Naive thymus-derived CD4-positive, alpha-beta T cell (primary cell): ENCODE measurements at regions of chr2 and their contacts with region 1.

Region 1: DNA sequence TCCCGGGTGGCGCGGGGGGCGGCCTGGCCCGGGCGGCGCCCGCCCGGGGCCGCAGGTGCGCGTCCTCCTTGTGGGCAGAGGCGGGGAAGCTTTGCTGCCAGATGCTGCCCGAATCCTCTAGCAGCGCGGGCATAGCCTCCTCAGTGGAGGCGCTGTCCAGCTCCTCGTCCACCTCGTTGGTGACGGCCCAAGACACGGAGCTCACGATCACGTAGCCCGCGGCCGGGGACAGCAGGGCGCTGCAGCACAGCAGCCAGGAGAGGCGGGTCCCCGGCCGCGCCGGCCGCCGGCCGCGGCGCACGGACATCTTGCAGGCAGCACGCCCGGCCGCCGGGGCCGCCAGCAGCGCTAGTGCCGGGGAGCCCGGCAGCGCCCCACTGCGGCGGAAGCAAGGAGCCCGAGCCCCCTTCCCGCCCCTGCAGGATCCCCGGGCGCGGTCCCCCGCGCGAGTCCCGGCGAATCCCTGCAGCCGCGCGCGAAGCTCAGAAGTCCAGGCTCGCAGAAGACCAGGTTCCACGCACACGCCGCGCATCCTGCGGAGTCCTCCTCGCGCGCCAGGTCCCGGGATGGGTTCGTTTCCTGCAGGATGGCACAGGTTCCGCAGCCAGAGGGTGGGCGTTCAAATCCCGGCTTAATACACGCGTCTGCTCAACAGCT is at the start of gene CREG2:
- DNase-seq: peak; percentile 26 to 71 (median 53)
- ATAC-seq: peak; percentile 91
- H3K4me3 ChIP-seq: peak within 1 kb of the TSS; percentile 41
- H3K4me3 Mint-ChIP-seq: peak within 1 kb of the TSS; percentile 67 to 84 (median 78)
- H3K27ac ChIP-seq: no peak within 1 kb of the TSS
- H3K27ac Mint-ChIP-seq: peak within 1 kb of the TSS in 1 of 9 donors; percentile 20
- H3K4me1 ChIP-seq: peaks cover 3% of the 10 kb centered on the region in 2 donors
- H3K4me1 Mint-ChIP-seq: peaks cover 5 to 15% (median 10%) of the 10 kb centered on the region in 7 donors
- H3K27me3 ChIP-seq: peaks cover 0 to 11% of the 10 kb centered on the region in 2 donors
- H3K27me3 Mint-ChIP-seq: peaks cover 34 to 80% (median 52%) of the 10 kb centered on the region in 5 donors
- total RNA-seq, gene CREG2: 0.56 TPM in 1 of 5 experiments, not detected in the others

Region 2: DNA sequence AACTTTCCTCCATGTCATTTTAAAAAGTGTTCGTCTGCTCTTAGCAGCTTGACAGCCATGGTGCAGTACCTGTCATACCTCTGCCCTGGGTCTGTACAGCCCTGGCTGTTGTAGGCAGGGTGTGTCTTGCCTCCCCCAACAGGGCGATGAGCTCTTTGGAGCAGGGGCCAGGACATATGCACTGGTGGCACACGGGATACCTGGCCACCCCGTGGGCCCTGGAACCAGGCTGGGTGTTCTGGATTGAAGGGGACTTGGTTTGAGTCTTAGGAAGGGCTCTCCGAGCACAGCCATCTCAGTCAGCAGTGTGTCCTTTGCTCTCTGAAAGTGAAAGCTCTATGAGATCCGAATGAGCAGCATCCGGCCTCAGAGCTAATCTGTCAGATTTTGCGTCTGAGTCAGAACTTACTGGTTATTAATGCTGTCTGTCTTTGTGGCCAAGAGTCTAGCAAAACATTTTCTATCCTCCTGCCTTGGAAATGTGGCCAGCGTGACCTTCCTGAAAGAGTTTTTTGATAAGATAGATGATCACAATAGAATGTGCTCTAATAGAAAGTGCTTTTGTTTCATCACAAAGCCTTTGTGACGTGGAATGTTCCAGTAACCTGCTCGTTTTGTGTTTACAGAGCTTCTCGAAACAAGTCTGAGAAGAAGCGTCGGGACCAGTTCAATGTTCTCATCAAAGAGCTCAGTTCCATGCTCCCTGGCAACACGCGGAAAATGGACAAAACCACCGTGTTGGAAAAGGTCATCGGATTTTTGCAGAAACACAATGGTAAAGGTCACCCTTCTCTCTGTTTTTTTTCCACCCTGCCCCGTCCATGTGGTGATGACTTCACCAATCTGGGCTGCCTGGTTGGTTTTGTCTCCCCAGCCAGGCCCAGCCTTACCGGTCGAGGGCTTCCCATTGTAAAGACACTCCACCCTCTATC is 462.5 kb before region 1 on chr2:
- CTCF ChIA-PET with region 1: no interaction called
- POLR2A ChIA-PET with region 1: no interaction called
- intact Hi-C with region 1: no loop called
- DNase-seq: peak in 6 of 9 donors; percentile 4 to 41 (median 25)
- ATAC-seq: peak; percentile 78
- H3K4me3 ChIP-seq: peak overlapping the region; percentile 31
- H3K4me3 Mint-ChIP-seq: peak overlapping the region in 9 of 10 donors; percentile 13 to 60 (median 52)
- H3K27ac ChIP-seq: peak overlapping the region; percentile 12
- H3K27ac Mint-ChIP-seq: peak overlapping the region; percentile 63 to 92 (median 89)
- H3K4me1 ChIP-seq: no peaks in the 10 kb centered on the region
- H3K4me1 Mint-ChIP-seq: peaks cover 3 to 18% (median 6%) of the 10 kb centered on the region in 7 donors
- H3K27me3 ChIP-seq: no peaks in the 10 kb centered on the region
- H3K27me3 Mint-ChIP-seq: no peaks in the 10 kb centered on the region

Region 3: GRCh38 chr2:101012706-101013181 is 374.5 kb before region 1 on chr2:
- CTCF ChIA-PET with region 1: no interaction called
- POLR2A ChIA-PET with region 1: no interaction called
- intact Hi-C with region 1: loop called in 1 of 2 experiments (anchors 2 kb)
- DNase-seq: peak in 7 of 9 donors; percentile 16 to 51 (median 38)
- ATAC-seq: no peak
- H3K4me3 ChIP-seq: no peak overlapping the region
- H3K4me3 Mint-ChIP-seq: no peak overlapping the region
- H3K27ac ChIP-seq: no peak overlapping the region
- H3K27ac Mint-ChIP-seq: no peak overlapping the region
- H3K4me1 ChIP-seq: no peaks in the 10 kb centered on the region
- H3K4me1 Mint-ChIP-seq: peaks cover 6 to 28% (median 12%) of the 10 kb centered on the region in 7 donors
- H3K27me3 ChIP-seq: no peaks in the 10 kb centered on the region
- H3K27me3 Mint-ChIP-seq: no peaks in the 10 kb centered on the region

Region 4: DNA sequence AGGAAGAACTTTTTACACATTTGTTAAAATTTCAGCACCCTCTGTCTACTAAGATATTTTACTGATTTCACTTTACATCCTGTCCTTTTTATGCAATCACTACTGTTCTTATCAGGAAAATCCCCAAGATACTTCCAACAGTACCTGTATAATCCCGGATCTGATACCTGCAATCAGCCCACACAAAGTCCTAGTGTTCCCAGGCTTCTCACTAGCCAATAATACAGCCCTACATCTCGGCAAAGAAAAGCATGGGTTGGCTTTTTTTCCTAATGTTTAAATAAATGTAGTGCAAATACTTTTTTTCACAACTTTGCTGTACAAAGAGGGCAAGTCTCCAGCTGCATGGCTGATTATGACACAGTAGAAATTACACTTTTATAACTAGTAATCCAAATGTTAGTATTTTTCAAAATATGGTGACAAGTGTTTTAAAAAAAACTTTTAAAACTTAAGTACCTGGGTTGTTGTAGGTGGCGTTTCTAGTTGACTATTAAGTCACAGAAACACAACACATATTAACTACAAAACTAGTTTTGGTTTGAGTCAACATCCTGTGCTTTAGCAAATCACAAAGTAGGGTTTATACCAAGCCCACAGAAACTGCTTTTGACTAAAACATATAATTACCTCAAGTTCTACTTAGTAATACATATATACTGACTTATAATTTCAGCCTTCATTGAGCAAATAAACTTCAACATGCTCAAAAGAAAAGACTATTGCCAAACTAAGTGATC is 115.1 kb before region 1 on chr2:
- CTCF ChIA-PET with region 1: no interaction called
- POLR2A ChIA-PET with region 1: no interaction called
- intact Hi-C with region 1: loop called in 1 of 2 experiments (anchors 10 kb)
- DNase-seq: no peak
- ATAC-seq: peak; percentile 29
- H3K4me3 ChIP-seq: no peak overlapping the region
- H3K4me3 Mint-ChIP-seq: peak overlapping the region in 1 of 10 donors; percentile 69
- H3K27ac ChIP-seq: peak overlapping the region; percentile 5
- H3K27ac Mint-ChIP-seq: peak overlapping the region; percentile 12 to 84 (median 69)
- H3K4me1 ChIP-seq: peaks cover 0 to 3% of the 10 kb centered on the region in 2 donors
- H3K4me1 Mint-ChIP-seq: peaks cover 17 to 49% (median 32%) of the 10 kb centered on the region in 7 donors
- H3K27me3 ChIP-seq: no peaks in the 10 kb centered on the region
- H3K27me3 Mint-ChIP-seq: no peaks in the 10 kb centered on the region

Region 5: DNA sequence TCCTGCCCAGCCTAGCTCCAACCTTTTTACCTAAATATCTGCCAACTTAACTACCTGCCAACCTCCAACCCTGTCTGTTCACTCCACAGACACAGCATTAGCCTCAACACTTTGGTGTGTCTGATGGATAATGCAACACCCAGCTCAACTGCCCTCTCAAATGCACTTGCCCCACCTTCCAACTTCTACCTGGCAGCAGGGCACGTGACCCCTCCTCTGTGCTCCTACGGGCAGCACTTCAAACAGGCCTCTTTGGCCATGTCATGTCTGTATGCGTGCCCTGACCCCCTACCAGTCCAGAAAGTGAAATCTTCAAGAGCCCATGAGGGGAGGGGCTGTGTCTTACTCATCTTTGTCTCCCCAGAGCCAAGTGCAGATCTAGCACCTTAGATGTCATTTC is 104.3 kb before region 1 on chr2:
- CTCF ChIA-PET with region 1: no interaction called
- POLR2A ChIA-PET with region 1: no interaction called
- intact Hi-C with region 1: loop called (anchors 5 to 10 kb)
- DNase-seq: no peak
- ATAC-seq: no peak
- H3K4me3 ChIP-seq: no peak overlapping the region
- H3K4me3 Mint-ChIP-seq: no peak overlapping the region
- H3K27ac ChIP-seq: no peak overlapping the region
- H3K27ac Mint-ChIP-seq: peak overlapping the region; percentile 19 to 91 (median 78)
- H3K4me1 ChIP-seq: no peaks in the 10 kb centered on the region
- H3K4me1 Mint-ChIP-seq: peaks cover 12 to 56% (median 42%) of the 10 kb centered on the region in 7 donors
- H3K27me3 ChIP-seq: no peaks in the 10 kb centered on the region
- H3K27me3 Mint-ChIP-seq: no peaks in the 10 kb centered on the region

Region 6: DNA sequence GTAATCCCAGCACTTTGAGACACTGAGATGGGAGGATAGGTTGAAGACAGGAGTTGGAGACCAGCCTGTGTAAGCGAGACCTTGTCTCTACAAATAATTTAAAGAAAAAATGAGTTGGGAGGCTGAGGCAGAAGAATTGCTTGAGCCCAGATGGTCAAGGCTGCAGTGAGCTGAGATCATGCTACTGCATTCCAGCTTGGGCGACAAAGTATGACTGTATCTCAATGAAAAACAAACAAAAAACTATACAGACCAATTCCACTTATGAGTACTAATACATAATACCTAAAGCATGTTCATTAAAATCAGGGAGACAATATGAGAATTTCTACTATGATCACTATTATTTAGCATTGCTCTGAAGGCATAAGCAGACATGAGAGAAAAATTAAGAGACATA is 91.4 kb before region 1 on chr2:
- CTCF ChIA-PET with region 1: no interaction called
- POLR2A ChIA-PET with region 1: no interaction called
- intact Hi-C with region 1: loop called in 1 of 2 experiments (anchors 5 kb)
- DNase-seq: no peak
- ATAC-seq: no peak
- H3K4me3 ChIP-seq: no peak overlapping the region
- H3K4me3 Mint-ChIP-seq: peak overlapping the region in 6 of 10 donors; percentile 7 to 53 (median 38)
- H3K27ac ChIP-seq: no peak overlapping the region
- H3K27ac Mint-ChIP-seq: peak overlapping the region in 3 of 9 donors; percentile 2 to 37 (median 11)
- H3K4me1 ChIP-seq: peaks cover 30 to 48% of the 10 kb centered on the region in 2 donors
- H3K4me1 Mint-ChIP-seq: peaks cover 42 to 81% (median 67%) of the 10 kb centered on the region in 7 donors
- H3K27me3 ChIP-seq: no peaks in the 10 kb centered on the region
- H3K27me3 Mint-ChIP-seq: no peaks in the 10 kb centered on the region

Region 7: DNA sequence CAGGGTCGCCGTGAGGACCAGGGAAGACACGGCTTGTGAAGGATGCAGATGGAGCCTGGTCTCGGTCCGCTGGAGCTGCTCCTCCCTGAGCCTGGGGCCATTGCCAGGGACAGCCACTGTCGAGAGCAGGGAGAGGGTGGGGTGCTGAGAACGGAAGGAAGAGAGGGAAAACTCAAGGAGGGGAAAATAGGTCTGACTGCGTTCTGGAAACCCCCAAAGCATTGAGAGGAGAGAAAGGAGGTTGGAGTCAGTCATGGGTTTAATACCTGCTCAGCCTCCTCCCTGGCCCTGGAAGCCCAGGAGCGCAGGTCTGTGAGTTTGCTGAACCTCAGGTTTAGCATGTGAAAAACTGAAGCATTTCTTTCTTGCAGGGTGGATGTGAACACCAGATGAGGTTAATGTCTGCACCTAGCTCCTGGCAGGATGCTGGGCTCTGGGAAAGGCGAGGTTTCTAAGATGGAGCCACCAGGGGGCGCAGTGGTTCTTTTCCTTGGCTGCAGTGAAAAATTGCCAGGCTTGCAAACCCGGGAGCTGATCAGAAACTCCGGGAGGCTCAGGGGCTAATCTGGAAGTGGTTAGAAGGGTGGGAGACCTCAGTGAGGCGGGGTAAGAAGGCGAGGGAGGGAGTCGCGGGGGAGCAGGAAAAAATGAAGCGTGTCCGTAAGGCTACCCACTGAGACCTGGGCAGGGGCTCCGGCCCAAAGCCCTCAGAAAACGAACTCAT is 45.2 kb before region 1 on chr2:
- CTCF ChIA-PET with region 1: interaction called, 24 read pairs
- POLR2A ChIA-PET with region 1: interaction called, 3 read pairs
- intact Hi-C with region 1: loop called (anchors 1 kb)
- DNase-seq: peak; percentile 32 to 73 (median 51)
- ATAC-seq: peak; percentile 76
- H3K4me3 ChIP-seq: no peak overlapping the region
- H3K4me3 Mint-ChIP-seq: peak overlapping the region in 4 of 10 donors; percentile 10 to 63 (median 18)
- H3K27ac ChIP-seq: no peak overlapping the region
- H3K27ac Mint-ChIP-seq: peak overlapping the region in 5 of 9 donors; percentile 9 to 68 (median 31)
- H3K4me1 ChIP-seq: peaks cover 6 to 21% of the 10 kb centered on the region in 2 donors
- H3K4me1 Mint-ChIP-seq: peaks cover 24 to 43% (median 32%) of the 10 kb centered on the region in 7 donors
- H3K27me3 ChIP-seq: no peaks in the 10 kb centered on the region
- H3K27me3 Mint-ChIP-seq: peaks cover 0 to 20% (median 0%) of the 10 kb centered on the region in 5 donors

Region 8: DNA sequence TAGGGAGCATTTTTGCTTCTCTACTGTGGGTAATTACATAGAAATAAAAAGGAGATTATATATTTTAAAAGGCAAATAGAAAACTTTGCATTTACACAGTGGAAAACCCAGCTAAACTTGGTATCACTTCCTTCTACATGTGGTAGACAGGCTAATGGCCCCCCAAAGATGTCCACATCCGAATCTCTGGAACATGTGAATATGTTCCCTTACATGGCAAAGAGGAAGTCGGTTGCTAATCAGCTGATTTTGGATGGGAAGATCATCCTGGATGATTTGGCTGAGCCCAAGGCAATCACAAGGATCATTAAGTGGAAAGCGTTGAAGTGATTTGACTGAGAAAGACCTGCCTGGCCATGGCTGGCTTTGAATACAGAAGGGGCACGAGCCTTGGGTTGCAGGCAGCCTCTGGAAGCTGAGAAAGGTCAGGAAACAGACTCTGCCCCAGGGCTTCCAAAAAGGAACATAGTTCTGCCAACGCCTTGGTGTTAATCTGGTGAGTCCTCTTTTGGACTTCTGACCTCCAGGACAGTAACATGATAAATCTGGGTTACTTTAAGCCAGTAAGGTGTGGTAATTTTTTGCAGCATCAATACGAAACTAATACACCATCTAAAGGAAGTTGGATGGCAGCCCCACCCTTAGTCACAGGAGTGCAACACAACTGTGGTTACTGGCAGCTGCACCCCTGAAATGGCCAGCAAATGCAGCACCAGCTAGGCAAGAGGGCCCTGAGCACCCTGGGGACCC is 26.0 kb before region 1 on chr2:
- CTCF ChIA-PET with region 1: interaction called, 13 read pairs
- POLR2A ChIA-PET with region 1: no interaction called
- intact Hi-C with region 1: no loop called
- DNase-seq: peak in 5 of 9 donors; percentile 22 to 44 (median 26)
- ATAC-seq: peak; percentile 69
- H3K4me3 ChIP-seq: peak overlapping the region; percentile 24
- H3K4me3 Mint-ChIP-seq: peak overlapping the region; percentile 29 to 73 (median 56)
- H3K27ac ChIP-seq: no peak overlapping the region
- H3K27ac Mint-ChIP-seq: peak overlapping the region in 7 of 9 donors; percentile 4 to 84 (median 48)
- H3K4me1 ChIP-seq: peaks cover 18 to 26% of the 10 kb centered on the region in 2 donors
- H3K4me1 Mint-ChIP-seq: peaks cover 26 to 42% (median 29%) of the 10 kb centered on the region in 7 donors
- H3K27me3 ChIP-seq: no peaks in the 10 kb centered on the region
- H3K27me3 Mint-ChIP-seq: peaks cover 0 to 17% (median 0%) of the 10 kb centered on the region in 5 donors